Sigmoid colon (tissue), 7 donors: ENCODE measurements at regions of chr11 and their contacts with region 1.

Region 1: GRCh38 chr11:8604078-8604723 is 10.2 kb upstream of the STK33 start:
- DNase-seq: peak; percentile 84
- H3K4me3 ChIP-seq: no peak overlapping the region
- H3K27ac ChIP-seq: peak overlapping the region; percentile 33 to 78 (median 64)
- H3K4me1 ChIP-seq: peaks cover 0 to 18% (median 8%) of the 10 kb centered on the region in 4 donors
- H3K27me3 ChIP-seq: no peaks in the 10 kb centered on the region
- CTCF ChIP-seq: peak; percentile 19 to 45 (median 36)
- EP300 ChIP-seq: peak in 2 of 4 donors; percentile 14 to 75
- POLR2A ChIP-seq: no peak

Region 2: DNA sequence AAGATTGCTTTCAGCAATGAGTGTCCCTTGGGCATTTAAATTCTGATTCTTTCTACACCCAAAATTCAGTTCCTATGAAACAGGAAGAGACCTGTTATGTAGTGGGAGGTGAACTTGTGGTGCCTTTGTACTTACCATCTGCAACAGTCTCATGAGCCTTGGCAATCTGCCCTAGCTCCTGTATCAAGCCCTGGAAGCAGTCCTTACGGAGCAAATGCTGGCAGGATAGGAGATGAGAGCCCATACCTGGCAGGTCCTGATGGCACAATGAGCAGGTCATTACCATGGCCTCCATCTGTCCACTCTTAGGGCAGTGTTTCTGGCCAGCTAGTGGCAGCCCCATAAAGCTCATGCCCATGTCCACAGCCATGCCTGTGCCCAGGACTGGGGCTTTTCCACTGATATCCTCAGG is 67.5 kb after region 1 on chr11:
- intact Hi-C with region 1: loop called (anchors 2 kb)
- DNase-seq: peak; percentile 82
- H3K4me3 ChIP-seq: no peak overlapping the region
- H3K27ac ChIP-seq: peak overlapping the region; percentile 76 to 89 (median 82)
- H3K4me1 ChIP-seq: peaks cover 0 to 21% (median 20%) of the 10 kb centered on the region in 4 donors
- H3K27me3 ChIP-seq: no peaks in the 10 kb centered on the region
- CTCF ChIP-seq: no peak
- EP300 ChIP-seq: peak in 1 of 4 donors; percentile 16
- POLR2A ChIP-seq: no peak

Region 3: GRCh38 chr11:8754241-8754640 is 150.0 kb after region 1 on chr11:
- intact Hi-C with region 1: no loop called
- DNase-seq: no peak
- H3K4me3 ChIP-seq: no peak overlapping the region
- H3K27ac ChIP-seq: peak overlapping the region; percentile 70 to 97 (median 88)
- H3K4me1 ChIP-seq: peaks cover 0 to 63% (median 55%) of the 10 kb centered on the region in 4 donors
- H3K27me3 ChIP-seq: no peaks in the 10 kb centered on the region
- CTCF ChIP-seq: peak in 1 of 4 experiments; percentile 15
- EP300 ChIP-seq: no peak
- POLR2A ChIP-seq: no peak